B cell (primary cell): ENCODE measurements at regions of chr12 and their contacts with region 1.

Region 1: GRCh38 chr12:53321074-53321814 is at the start of gene AAAS:
- DNase-seq: peak; percentile 97
- ATAC-seq: peak; percentile 81
- H3K4me3 ChIP-seq: peak within 1 kb of the TSS; percentile 31 to 95 (median 87)
- H3K4me3 Mint-ChIP-seq: peak within 1 kb of the TSS; percentile 99
- H3K27ac ChIP-seq: peak within 1 kb of the TSS; percentile 73 to 84
- H3K27ac Mint-ChIP-seq: peak within 1 kb of the TSS; percentile 99
- H3K4me1 ChIP-seq: peaks cover 26 to 36% of the 10 kb centered on the region in 2 donors
- H3K4me1 Mint-ChIP-seq: peaks cover 39% of the 10 kb centered on the region
- H3K27me3 ChIP-seq: no peaks in the 10 kb centered on the region
- H3K27me3 Mint-ChIP-seq: no peaks in the 10 kb centered on the region
- CTCF ChIP-seq: peak; percentile 99
- total RNA-seq, gene AAAS: 65.1 and 68.4 TPM in 2 replicates

Region 2: DNA sequence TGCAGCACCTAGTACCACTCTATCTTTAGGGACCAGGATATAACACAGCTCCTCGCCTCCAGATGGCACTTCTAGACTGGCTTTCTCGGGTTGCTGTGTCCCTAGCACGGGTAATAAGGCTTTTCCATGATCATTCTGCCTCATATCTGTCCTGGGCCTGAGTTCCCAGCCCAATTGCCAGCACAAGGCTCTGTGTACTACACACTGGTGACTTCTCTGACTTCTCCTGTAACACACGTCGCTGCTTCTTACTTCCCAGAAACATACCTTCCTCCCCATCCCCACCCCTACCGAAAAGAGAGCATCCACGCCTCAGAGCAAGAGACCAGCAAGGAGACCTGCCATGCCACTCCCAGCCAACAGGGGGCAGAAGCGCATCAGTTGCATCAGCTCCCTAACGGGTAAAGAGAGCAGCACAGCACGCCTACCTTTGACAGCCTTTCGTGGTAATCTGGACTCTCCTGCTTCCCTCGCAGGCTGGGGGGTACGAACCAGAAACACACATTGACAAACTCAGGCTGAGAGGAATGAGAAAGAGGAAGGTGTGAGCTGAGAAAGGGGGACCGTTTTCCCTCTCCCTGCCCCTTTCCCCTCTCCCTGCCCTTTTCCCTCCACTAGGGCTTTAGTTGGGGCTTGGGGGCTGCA is 161.9 kb before region 1 on chr12:
- CTCF ChIA-PET with region 1: interaction called, 37 read pairs
- POLR2A ChIA-PET with region 1: interaction called, 4 read pairs
- intact Hi-C with region 1: loop called (anchors 1 kb)
- DNase-seq: peak; percentile 88
- ATAC-seq: peak; percentile 100
- H3K4me3 ChIP-seq: no peak overlapping the region
- H3K4me3 Mint-ChIP-seq: no peak overlapping the region
- H3K27ac ChIP-seq: no peak overlapping the region
- H3K27ac Mint-ChIP-seq: no peak overlapping the region
- H3K4me1 ChIP-seq: peaks cover 4 to 8% of the 10 kb centered on the region in 2 donors
- H3K4me1 Mint-ChIP-seq: peaks cover 4% of the 10 kb centered on the region
- H3K27me3 ChIP-seq: no peaks in the 10 kb centered on the region
- H3K27me3 Mint-ChIP-seq: no peaks in the 10 kb centered on the region
- CTCF ChIP-seq: peak; percentile 97

Region 3: GRCh38 chr12:53220801-53221202 is 100.4 kb before region 1 on chr12:
- CTCF ChIA-PET with region 1: interaction called, 123 read pairs
- POLR2A ChIA-PET with region 1: interaction called, 21 read pairs
- intact Hi-C with region 1: loop called (anchors 1 kb)
- DNase-seq: peak; percentile 92
- ATAC-seq: peak; percentile 76
- H3K4me3 ChIP-seq: peak overlapping the region; percentile 63 to 100 (median 90)
- H3K4me3 Mint-ChIP-seq: peak overlapping the region; percentile 97
- H3K27ac ChIP-seq: peak overlapping the region; percentile 93 to 95
- H3K27ac Mint-ChIP-seq: peak overlapping the region; percentile 98
- H3K4me1 ChIP-seq: peaks cover 39 to 56% of the 10 kb centered on the region in 2 donors
- H3K4me1 Mint-ChIP-seq: peaks cover 53% of the 10 kb centered on the region
- H3K27me3 ChIP-seq: no peaks in the 10 kb centered on the region
- H3K27me3 Mint-ChIP-seq: no peaks in the 10 kb centered on the region
- CTCF ChIP-seq: no peak

Region 4: DNA sequence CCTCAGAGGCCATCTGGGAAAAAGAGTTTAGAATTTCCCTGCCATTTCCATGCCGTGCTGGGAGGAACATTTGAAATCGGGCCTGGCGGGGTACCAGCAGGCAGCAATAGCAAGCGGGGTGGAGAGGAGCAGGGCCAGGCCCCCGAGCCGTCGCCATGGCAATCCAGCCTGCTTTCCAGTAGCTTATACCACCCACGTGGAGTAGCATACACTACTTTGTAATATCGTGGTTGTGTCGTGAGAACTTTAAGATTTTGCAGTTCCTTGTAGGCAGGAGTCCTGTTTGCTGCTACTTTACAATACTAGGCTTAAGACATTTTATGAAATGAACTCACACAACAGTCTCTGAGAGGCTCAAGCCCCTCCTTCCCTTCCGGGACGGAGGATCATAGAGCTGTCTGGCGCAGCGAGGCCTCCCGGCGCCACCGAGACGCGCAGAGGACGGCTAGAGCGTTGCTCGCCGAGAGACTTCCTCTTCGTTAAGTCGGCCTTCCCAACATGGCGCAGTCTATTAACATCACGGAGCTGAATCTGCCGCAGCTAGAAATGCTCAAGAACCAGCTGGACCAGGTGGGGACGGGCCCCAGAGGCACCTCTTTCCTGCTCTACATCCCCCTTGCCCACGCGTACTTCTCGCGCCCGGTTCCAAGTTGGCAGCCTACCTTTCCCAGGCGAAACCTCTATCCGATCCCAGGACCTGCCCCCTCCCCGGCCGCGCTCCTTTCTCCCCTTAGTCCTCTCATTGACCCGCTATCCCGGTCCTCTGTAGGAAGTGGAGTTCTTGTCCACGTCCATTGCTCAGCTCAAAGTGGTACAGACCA is 26.0 kb before region 1 on chr12 and contains the start of gene PFDN5:
- CTCF ChIA-PET with region 1: interaction called, 207 read pairs
- POLR2A ChIA-PET with region 1: interaction called, 19 read pairs
- intact Hi-C with region 1: loop called (anchors 1 kb)
- DNase-seq: peak; percentile 92
- ATAC-seq: peak; percentile 90
- H3K4me3 ChIP-seq: peak within 1 kb of the TSS; percentile 64 to 96 (median 82)
- H3K4me3 Mint-ChIP-seq: peak within 1 kb of the TSS; percentile 100
- H3K27ac ChIP-seq: peak within 1 kb of the TSS; percentile 69 to 86
- H3K27ac Mint-ChIP-seq: peak within 1 kb of the TSS; percentile 99
- H3K4me1 ChIP-seq: peaks cover 26 to 39% of the 10 kb centered on the region in 2 donors
- H3K4me1 Mint-ChIP-seq: peaks cover 50% of the 10 kb centered on the region
- H3K27me3 ChIP-seq: no peaks in the 10 kb centered on the region
- H3K27me3 Mint-ChIP-seq: no peaks in the 10 kb centered on the region
- CTCF ChIP-seq: no peak
- total RNA-seq, gene PFDN5: 627 and 654 TPM in 2 replicates

Region 5: DNA sequence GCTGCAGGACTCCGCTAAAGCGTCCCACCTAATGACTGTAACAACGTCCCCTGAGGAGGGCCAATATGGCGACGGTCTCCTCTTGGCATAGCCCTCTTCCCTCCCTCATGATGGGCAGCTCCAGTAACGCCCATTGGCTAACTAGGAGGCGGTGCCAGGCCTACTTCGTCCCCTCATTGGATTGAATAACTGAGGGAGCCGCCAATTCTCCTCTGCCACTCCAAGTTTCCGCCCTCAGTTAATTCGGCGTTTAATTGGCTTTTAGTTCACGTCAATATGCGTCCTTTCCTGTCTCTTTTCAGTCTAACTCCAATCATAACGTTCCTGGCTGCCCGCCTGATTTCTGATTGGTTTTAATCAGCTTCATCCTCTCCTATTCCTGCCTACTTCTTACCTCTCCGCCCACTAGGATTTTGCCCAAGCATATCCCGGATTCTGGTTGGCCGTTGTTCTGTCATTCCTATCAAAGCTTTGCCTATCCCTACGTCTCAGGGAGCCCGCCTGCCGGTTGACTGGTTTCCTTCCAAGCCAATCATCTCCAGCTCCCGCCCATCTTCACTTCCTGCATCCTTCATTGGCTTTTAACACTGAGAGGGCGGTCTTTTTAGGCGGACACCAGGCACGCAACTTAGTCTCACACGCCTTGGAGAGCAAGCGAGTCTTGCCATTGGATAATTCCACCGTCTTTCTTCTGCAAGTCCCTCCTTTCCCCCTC is 58.3 kb after region 1 on chr12:
- CTCF ChIA-PET with region 1: interaction called, 11 read pairs
- POLR2A ChIA-PET with region 1: interaction called, 10 read pairs
- intact Hi-C with region 1: loop called (anchors 1 kb)
- DNase-seq: peak; percentile 99
- ATAC-seq: peak; percentile 70
- H3K4me3 ChIP-seq: peak overlapping the region; percentile 60 to 93 (median 64)
- H3K4me3 Mint-ChIP-seq: no peak overlapping the region
- H3K27ac ChIP-seq: peak overlapping the region; percentile 76 to 89
- H3K27ac Mint-ChIP-seq: no peak overlapping the region
- H3K4me1 ChIP-seq: peaks cover 39 to 46% of the 10 kb centered on the region in 2 donors
- H3K4me1 Mint-ChIP-seq: peaks cover 33% of the 10 kb centered on the region
- H3K27me3 ChIP-seq: no peaks in the 10 kb centered on the region
- H3K27me3 Mint-ChIP-seq: no peaks in the 10 kb centered on the region
- CTCF ChIP-seq: no peak

Region 6: GRCh38 chr12:53451661-53452158 is 130.5 kb after region 1 on chr12 and contains the start of gene PCBP2:
- CTCF ChIA-PET with region 1: interaction called, 5 read pairs
- POLR2A ChIA-PET with region 1: no interaction called
- intact Hi-C with region 1: loop called (anchors 1 kb)
- DNase-seq: peak; percentile 98
- ATAC-seq: peak; percentile 90
- H3K4me3 ChIP-seq: peak within 1 kb of the TSS; percentile 67 to 92 (median 85)
- H3K4me3 Mint-ChIP-seq: peak within 1 kb of the TSS; percentile 97
- H3K27ac ChIP-seq: peak within 1 kb of the TSS; percentile 90 to 94
- H3K27ac Mint-ChIP-seq: peak within 1 kb of the TSS; percentile 99
- H3K4me1 ChIP-seq: peaks cover 15 to 20% of the 10 kb centered on the region in 2 donors
- H3K4me1 Mint-ChIP-seq: peaks cover 27% of the 10 kb centered on the region
- H3K27me3 ChIP-seq: no peaks in the 10 kb centered on the region
- H3K27me3 Mint-ChIP-seq: no peaks in the 10 kb centered on the region
- CTCF ChIP-seq: peak; percentile 84
- total RNA-seq, gene PCBP2: 916 and 944 TPM in 2 replicates

Region 7: GRCh38 chr12:53508534-53509199 is 187.4 kb after region 1 on chr12:
- CTCF ChIA-PET with region 1: interaction called, 24 read pairs
- POLR2A ChIA-PET with region 1: no interaction called
- intact Hi-C with region 1: loop called (anchors 1 kb)
- DNase-seq: peak; percentile 87
- ATAC-seq: peak; percentile 100
- H3K4me3 ChIP-seq: no peak overlapping the region
- H3K4me3 Mint-ChIP-seq: no peak overlapping the region
- H3K27ac ChIP-seq: peak overlapping the region; percentile 30 to 31
- H3K27ac Mint-ChIP-seq: peak overlapping the region; percentile 64
- H3K4me1 ChIP-seq: peaks cover 6 to 8% of the 10 kb centered on the region in 2 donors
- H3K4me1 Mint-ChIP-seq: peaks cover 10% of the 10 kb centered on the region
- H3K27me3 ChIP-seq: no peaks in the 10 kb centered on the region
- H3K27me3 Mint-ChIP-seq: no peaks in the 10 kb centered on the region
- CTCF ChIP-seq: peak; percentile 95